Activated naive CD4-positive, alpha-beta T cell treated with anti-CD3 and anti-CD28 coated beads, Interleukin-2, amount 10 ng/mL, durations not matched to agents 7 days and 5 days (primary cell): ENCODE measurements at regions of chr19 and their contacts with region 1.

Region 1: GRCh38 chr19:18588611-18589379 is at the start of gene REX1BD:
- DNase-seq: peak; percentile 92
- H3K4me3 Mint-ChIP-seq: peak within 1 kb of the TSS; percentile 77
- H3K27ac Mint-ChIP-seq: peak within 1 kb of the TSS; percentile 97
- H3K4me1 Mint-ChIP-seq: peaks cover 53% of the 10 kb centered on the region
- H3K27me3 Mint-ChIP-seq: peaks cover 9% of the 10 kb centered on the region

Region 2: DNA sequence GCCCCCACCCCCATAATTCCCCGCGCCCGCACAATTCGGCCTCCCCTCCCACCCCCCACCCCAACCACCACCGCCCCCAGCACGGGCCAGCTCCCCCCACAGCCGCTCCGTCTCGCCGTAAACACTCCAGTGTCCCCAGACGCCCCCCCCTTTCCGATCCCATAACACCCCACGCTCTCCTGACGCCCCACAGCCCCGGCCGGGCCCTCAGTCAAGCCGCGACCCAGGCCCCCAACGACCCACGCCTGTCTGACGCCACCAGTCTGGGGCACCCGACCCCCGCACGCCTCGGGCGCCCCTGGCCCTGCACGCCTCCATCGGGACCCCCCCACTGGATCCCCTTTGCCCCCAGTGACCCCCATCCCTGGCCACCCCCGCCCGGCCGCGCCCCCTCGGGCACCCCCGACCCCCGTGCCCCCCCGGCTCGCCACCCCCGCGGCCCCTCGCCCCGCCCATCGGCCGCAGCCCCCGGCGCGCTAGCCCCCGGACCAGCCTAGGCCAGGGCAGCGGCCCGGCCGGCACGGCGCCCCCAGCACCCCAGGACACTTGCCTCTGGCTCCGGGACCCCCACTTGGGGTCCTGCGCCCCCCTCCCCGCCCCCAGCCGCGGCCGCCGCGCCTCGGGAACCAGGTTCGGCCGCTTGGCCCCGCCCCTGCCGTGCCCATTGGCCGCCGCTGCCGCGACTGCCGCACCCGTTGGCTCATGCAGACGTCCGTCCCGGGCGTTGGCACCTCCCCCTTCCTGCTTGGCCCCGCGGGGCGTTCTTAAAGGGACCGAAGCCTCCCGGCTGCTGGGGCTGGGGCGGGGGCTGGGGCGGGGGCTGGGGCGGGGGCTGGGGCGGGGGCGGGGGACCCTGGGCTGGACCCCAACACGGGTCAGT is 45.6 kb before region 1 on chr19 and contains the start of gene FKBP8:
- CTCF ChIA-PET with region 1: interaction called, 19 read pairs
- DNase-seq: peak; percentile 98
- H3K4me3 Mint-ChIP-seq: peak within 1 kb of the TSS; percentile 96
- H3K27ac Mint-ChIP-seq: peak within 1 kb of the TSS; percentile 99
- H3K4me1 Mint-ChIP-seq: peaks cover 34% of the 10 kb centered on the region
- H3K27me3 Mint-ChIP-seq: peaks cover 18% of the 10 kb centered on the region

Region 3: GRCh38 chr19:18557474-18558201 is 31.2 kb before region 1 on chr19 and contains the start of gene KXD1:
- CTCF ChIA-PET with region 1: interaction called, 14 read pairs
- DNase-seq: peak; percentile 99
- H3K4me3 Mint-ChIP-seq: peak within 1 kb of the TSS; percentile 91
- H3K27ac Mint-ChIP-seq: peak within 1 kb of the TSS; percentile 96
- H3K4me1 Mint-ChIP-seq: peaks cover 25% of the 10 kb centered on the region
- H3K27me3 Mint-ChIP-seq: peaks cover 2% of the 10 kb centered on the region

Region 4: GRCh38 chr19:18571564-18572300 is 17.1 kb before region 1 on chr19 and contains the start of gene UBA52:
- CTCF ChIA-PET with region 1: interaction called, 19 read pairs
- DNase-seq: peak; percentile 99
- H3K4me3 Mint-ChIP-seq: peak within 1 kb of the TSS; percentile 81
- H3K27ac Mint-ChIP-seq: peak within 1 kb of the TSS; percentile 98
- H3K4me1 Mint-ChIP-seq: peaks cover 32% of the 10 kb centered on the region
- H3K27me3 Mint-ChIP-seq: no peaks in the 10 kb centered on the region

Region 5: DNA sequence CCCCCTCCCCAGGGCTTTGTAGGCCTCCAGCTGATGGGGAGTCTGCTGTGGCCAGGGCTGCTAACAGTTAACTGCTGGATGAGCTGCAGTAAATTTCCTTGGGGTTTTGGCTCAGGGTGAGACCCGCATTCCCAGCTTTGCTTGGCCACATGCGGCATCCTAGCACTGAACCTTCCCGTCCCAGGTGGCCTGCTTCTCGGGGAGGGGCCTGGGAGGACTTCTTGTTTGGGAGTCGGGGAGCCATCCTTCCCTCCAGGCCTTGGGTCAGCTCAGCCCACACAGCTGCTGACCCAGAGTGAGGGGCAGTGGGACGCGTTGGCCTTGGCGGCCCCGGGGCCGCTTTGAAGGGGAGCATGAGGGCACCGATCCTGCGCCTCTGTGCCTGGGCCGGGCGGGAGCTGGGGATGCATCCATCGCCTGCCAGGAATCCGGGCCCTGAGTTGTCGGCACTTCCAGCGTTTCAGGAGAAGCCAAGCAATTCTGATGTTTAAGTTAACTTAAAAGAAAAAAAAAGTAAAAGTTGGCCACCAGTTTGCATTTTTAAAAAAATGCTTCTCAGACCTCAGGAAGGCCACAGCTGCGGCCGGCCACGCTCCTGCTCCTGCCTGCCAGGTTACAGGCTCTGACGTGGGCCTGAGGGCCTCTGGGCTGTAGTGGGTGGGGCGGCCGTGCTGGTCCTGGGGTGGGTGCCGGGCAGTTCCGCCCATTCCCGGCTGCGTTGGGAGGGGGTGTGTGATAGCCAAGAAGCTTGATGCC is 122.4 kb after region 1 on chr19:
- CTCF ChIA-PET with region 1: no interaction called
- DNase-seq: no peak
- H3K4me3 Mint-ChIP-seq: no peak overlapping the region
- H3K27ac Mint-ChIP-seq: no peak overlapping the region
- H3K4me1 Mint-ChIP-seq: no peaks in the 10 kb centered on the region
- H3K27me3 Mint-ChIP-seq: no peaks in the 10 kb centered on the region